ENCODE measurements at regions of chr16 and their contacts with region 1.

Region 1: GRCh38 chr16:19696328-19696727 is 21.7 kb downstream of the KNOP1 start:
- DNase-seq: peak; percentile 80
- H3K4me3 ChIP-seq: no peak overlapping the region
- H3K27ac ChIP-seq: peak overlapping the region; percentile 66 to 74
- H3K4me1 ChIP-seq: peaks cover 48% of the 10 kb centered on the region
- H3K27me3 ChIP-seq: no peaks in the 10 kb centered on the region
- CTCF ChIP-seq: no peak
- POLR2A ChIP-seq: no peak

Region 2: DNA sequence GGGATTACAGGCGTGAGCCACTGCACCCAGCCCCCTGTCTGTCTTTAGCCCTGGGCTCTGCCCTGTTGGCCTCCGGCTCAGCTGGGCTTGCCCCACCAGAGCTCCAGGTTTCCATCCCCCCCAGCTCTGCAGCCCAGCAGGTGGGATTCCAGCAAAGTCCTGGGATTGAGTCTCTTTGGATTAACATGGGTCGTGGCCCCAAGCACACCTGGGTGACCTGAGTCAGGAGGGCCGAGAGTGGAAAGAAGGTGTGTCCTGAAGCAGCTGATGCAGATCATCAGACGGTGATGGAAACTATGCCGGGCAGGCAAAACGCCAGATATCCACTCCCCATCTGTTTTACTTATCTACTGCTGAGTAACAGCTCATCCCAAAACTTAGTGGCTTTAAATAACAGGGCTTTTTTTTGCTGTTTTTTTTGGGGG is 50.8 kb before region 1 on chr16:
- intact Hi-C with region 1: loop called (anchors 10 kb)
- DNase-seq: peak; percentile 77
- H3K4me3 ChIP-seq: peak overlapping the region in 1 of 2 donors; percentile 11
- H3K27ac ChIP-seq: peak overlapping the region; percentile 82 to 89
- H3K4me1 ChIP-seq: peaks cover 14% of the 10 kb centered on the region
- H3K27me3 ChIP-seq: no peaks in the 10 kb centered on the region
- CTCF ChIP-seq: no peak
- POLR2A ChIP-seq: no peak

Region 3: DNA sequence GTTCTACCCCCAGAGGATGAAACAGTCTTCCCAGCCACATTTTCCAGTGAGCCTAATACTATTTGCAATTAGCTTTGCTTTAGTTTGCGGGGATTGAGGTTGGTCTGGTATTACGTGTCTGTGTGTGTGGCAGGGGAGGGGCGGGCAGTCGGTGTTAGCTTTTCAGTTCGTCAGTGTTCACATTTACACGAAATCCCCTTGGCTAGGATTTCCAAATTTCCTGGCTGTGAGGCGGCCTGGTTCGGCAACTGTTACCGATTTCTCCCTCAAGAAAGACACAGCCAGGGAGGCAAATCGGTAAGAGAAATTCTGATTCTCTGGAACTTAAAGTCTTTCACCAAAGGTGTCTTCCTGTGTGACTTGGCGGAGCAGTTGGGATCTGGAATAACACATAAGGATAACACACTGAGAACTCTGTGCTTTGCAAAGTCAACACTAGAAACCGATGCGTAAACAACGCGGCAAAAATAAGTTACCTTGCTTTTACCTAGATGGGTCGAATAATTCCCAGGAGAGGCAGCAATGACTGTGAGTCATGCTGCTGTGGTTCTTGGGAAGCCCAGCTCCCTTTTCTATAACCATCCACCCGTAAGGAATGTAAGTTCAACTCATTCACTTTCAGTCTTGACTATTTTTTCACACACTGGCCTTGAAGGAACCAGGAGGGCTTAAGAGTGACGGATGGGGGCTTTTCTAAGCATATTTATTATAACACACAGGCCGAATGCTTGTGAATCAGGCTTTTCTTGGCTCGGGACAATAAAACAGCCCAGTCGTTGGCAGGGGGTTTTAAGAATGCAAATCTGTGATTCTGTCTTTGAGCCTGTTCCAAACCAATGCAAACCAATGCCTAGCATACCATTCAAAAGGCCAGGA is 164.1 kb after region 1 on chr16:
- intact Hi-C with region 1: no loop called
- DNase-seq: no peak
- H3K4me3 ChIP-seq: no peak overlapping the region
- H3K27ac ChIP-seq: peak overlapping the region in 1 of 2 donors; percentile 56
- H3K4me1 ChIP-seq: peaks cover 7% of the 10 kb centered on the region
- H3K27me3 ChIP-seq: no peaks in the 10 kb centered on the region
- CTCF ChIP-seq: no peak
- POLR2A ChIP-seq: no peak